ENCODE measurements at regions of chr1 and their contacts with region 1.

Region 1: GRCh38 chr1:91555821-91556531 is 55.3 kb downstream of the CDC7 start:
- DNase-seq: peak; percentile 79
- H3K4me3 Mint-ChIP-seq: peak overlapping the region; percentile 51
- H3K27ac Mint-ChIP-seq: peak overlapping the region; percentile 91
- H3K4me1 Mint-ChIP-seq: peaks cover 87% of the 10 kb centered on the region
- H3K27me3 Mint-ChIP-seq: no peaks in the 10 kb centered on the region

Region 2: GRCh38 chr1:91490501-91490900 is 65.5 kb before region 1 on chr1:
- CTCF ChIA-PET with region 1: no interaction called
- POLR2A ChIA-PET with region 1: no interaction called
- intact Hi-C with region 1: no loop called
- DNase-seq: no peak
- H3K4me3 Mint-ChIP-seq: no peak overlapping the region
- H3K27ac Mint-ChIP-seq: no peak overlapping the region
- H3K4me1 Mint-ChIP-seq: peaks cover 6% of the 10 kb centered on the region
- H3K27me3 Mint-ChIP-seq: no peaks in the 10 kb centered on the region

Region 3: GRCh38 chr1:91523482-91523881 is 32.5 kb before region 1 on chr1:
- CTCF ChIA-PET with region 1: interaction called, 4 read pairs
- POLR2A ChIA-PET with region 1: interaction called, 3 read pairs
- intact Hi-C with region 1: loop called (anchors 1 kb)
- DNase-seq: peak; percentile 65
- H3K4me3 Mint-ChIP-seq: no peak overlapping the region
- H3K27ac Mint-ChIP-seq: no peak overlapping the region
- H3K4me1 Mint-ChIP-seq: peaks cover 32% of the 10 kb centered on the region
- H3K27me3 Mint-ChIP-seq: no peaks in the 10 kb centered on the region

Region 4: DNA sequence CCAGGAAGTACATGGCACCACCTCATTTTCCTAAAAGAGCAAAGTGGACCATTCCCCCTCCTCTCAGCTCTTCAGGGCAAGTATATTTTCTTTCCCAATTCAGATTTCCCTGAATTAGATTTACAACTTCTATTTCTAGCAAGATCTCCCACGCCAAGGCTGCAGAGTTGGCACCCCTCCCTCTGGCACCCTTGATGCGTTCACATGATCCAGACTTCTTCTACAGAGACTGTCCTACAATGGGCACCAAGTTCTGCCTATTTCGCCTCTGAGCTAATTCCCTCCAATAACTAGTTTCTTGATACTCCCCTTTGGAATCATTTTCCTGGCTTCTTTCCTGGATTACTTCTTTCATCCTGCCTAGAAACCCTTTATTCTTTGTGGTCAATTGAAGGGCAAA is 66.6 kb after region 1 on chr1:
- CTCF ChIA-PET with region 1: no interaction called
- POLR2A ChIA-PET with region 1: no interaction called
- intact Hi-C with region 1: no loop called
- DNase-seq: no peak
- H3K4me3 Mint-ChIP-seq: no peak overlapping the region
- H3K27ac Mint-ChIP-seq: no peak overlapping the region
- H3K4me1 Mint-ChIP-seq: no peaks in the 10 kb centered on the region
- H3K27me3 Mint-ChIP-seq: no peaks in the 10 kb centered on the region

Region 5: GRCh38 chr1:91673613-91674012 is 117.6 kb after region 1 on chr1:
- CTCF ChIA-PET with region 1: no interaction called
- POLR2A ChIA-PET with region 1: no interaction called
- intact Hi-C with region 1: loop called (anchors 1 kb)
- DNase-seq: no peak
- H3K4me3 Mint-ChIP-seq: no peak overlapping the region
- H3K27ac Mint-ChIP-seq: no peak overlapping the region
- H3K4me1 Mint-ChIP-seq: peaks cover 37% of the 10 kb centered on the region
- H3K27me3 Mint-ChIP-seq: no peaks in the 10 kb centered on the region

Region 6: DNA sequence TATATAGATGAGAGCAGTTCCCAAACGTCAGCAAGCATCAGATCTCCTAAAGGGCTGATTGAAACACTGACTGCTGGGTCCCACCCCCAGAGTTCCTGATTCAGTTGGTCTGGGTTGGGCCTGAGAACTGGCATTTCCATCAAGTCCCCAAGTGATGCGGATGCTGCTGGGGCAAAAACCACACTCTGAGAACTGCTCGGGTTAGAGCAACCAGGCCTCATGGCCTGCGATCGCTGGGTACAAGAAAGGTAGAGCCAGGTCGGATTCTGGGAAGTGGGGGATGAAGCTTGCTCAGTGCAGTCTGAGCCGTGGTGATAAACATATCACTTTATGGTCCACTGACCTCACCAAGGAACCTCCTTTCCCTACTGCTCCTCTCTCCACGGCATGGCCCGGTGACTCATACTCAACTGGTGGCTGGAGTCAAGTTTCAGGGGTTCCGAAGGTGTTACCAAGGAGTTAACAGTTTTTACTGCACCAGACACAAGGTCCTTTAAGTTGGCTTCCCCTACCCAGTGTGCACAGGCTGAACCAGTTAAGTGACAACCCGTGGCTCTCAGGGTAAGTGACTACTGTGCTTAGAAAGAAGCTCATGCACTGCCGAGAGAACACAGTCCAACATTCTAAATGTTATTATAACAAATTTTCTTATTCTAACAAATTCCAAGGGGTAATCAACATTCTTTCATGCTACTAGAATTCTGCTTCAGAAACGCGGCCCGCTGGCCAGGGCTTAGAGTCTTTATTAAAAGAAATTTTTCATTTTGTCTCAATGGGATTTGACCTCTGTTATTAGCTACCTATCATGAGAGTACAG is 176.5 kb after region 1 on chr1:
- CTCF ChIA-PET with region 1: no interaction called
- POLR2A ChIA-PET with region 1: no interaction called
- intact Hi-C with region 1: loop called (anchors 1 kb)
- DNase-seq: peak; percentile 65
- H3K4me3 Mint-ChIP-seq: peak overlapping the region; percentile 24
- H3K27ac Mint-ChIP-seq: peak overlapping the region; percentile 29
- H3K4me1 Mint-ChIP-seq: peaks cover 50% of the 10 kb centered on the region
- H3K27me3 Mint-ChIP-seq: no peaks in the 10 kb centered on the region

Region 7: DNA sequence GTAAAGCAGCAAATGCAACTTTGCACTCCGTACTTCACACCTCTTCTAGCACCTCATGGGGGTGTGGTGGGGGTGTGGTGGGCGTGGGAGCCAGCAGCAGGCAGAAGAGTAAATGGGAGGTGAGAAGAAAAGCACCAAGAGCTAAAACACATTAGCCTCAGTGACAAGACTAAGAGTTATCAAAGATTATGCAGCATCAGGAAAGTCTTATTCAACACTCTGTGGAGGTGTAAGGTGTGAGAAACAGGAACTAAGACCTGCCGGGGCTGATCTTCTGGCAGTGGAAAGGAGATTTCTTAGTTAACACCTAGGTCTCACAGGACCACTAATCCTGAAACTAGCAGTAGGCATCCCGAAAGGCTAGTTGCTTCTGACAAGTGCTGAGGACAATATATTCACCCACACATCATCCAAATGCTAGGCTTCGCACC is 320.1 kb after region 1 on chr1:
- CTCF ChIA-PET with region 1: no interaction called
- POLR2A ChIA-PET with region 1: no interaction called
- intact Hi-C with region 1: loop called (anchors 1 kb)
- DNase-seq: peak; percentile 64
- H3K4me3 Mint-ChIP-seq: no peak overlapping the region
- H3K27ac Mint-ChIP-seq: peak overlapping the region; percentile 18
- H3K4me1 Mint-ChIP-seq: peaks cover 75% of the 10 kb centered on the region
- H3K27me3 Mint-ChIP-seq: no peaks in the 10 kb centered on the region

Region 8: GRCh38 chr1:92065044-92065443 is 509.1 kb after region 1 on chr1:
- CTCF ChIA-PET with region 1: no interaction called
- POLR2A ChIA-PET with region 1: no interaction called
- intact Hi-C with region 1: no loop called
- DNase-seq: no peak
- H3K4me3 Mint-ChIP-seq: no peak overlapping the region
- H3K27ac Mint-ChIP-seq: no peak overlapping the region
- H3K4me1 Mint-ChIP-seq: no peaks in the 10 kb centered on the region
- H3K27me3 Mint-ChIP-seq: no peaks in the 10 kb centered on the region

Region 9: GRCh38 chr1:92536980-92537884 is 981.3 kb after region 1 on chr1:
- CTCF ChIA-PET with region 1: no interaction called
- POLR2A ChIA-PET with region 1: no interaction called
- intact Hi-C with region 1: loop called (anchors 10 kb)
- DNase-seq: no peak
- H3K4me3 Mint-ChIP-seq: peak overlapping the region; percentile 54
- H3K27ac Mint-ChIP-seq: peak overlapping the region; percentile 98
- H3K4me1 Mint-ChIP-seq: peaks cover 86% of the 10 kb centered on the region
- H3K27me3 Mint-ChIP-seq: no peaks in the 10 kb centered on the region

Measured in activated CD4-positive, alpha-beta memory T cell treated with anti-CD3 and anti-CD28 coated beads for 36 hours (primary cell).